OCI-LY7 (cell line): ENCODE measurements at regions of chr6 and their contacts with region 1.

Region 1: DNA sequence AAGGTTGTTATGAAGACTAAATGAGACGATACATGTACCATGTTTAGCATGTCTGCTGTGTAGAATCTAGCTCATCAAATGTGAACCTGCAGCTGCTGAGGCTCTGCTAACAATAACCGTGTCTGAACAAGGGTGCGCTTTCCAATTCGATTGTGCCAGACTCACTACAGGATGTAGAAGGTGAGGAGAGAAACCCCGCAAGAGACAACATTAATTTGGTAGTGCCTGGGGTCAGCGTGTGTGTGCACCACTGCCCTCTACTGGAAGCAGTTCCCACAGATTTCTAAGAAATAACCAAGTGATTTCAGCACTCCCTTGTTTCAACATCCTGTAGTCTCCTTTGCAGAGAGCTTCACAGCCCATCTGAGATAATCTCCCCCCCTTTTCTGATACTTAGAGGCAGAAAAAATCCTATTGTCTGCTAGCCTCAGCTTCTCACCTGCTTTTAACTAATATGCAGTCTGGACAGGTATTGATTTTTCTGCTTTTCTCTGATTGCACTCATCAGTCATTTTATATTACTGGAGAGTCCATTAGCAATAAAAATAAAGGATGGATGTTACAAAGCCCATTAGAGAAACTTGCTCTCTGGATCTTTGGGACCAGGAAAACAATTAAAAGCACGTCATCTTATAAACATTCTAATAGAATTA is 96.7 kb upstream of the BACH2 start:
- DNase-seq: peak; percentile 93
- H3K4me3 ChIP-seq: peak overlapping the region; percentile 18
- H3K27ac ChIP-seq: peak overlapping the region; percentile 71
- H3K4me1 ChIP-seq: peaks cover 67% of the 10 kb centered on the region
- CTCF ChIP-seq: peak; percentile 97

Region 2: GRCh38 chr6:89940225-89941027 is 452.9 kb before region 1 on chr6:
- CTCF ChIA-PET with region 1: interaction called, 7 read pairs
- POLR2A ChIA-PET with region 1: no interaction called
- intact Hi-C with region 1: loop called (anchors 5 kb)
- DNase-seq: peak; percentile 71
- H3K4me3 ChIP-seq: no peak overlapping the region
- H3K27ac ChIP-seq: no peak overlapping the region
- H3K4me1 ChIP-seq: no peaks in the 10 kb centered on the region
- CTCF ChIP-seq: peak; percentile 89

Region 3: DNA sequence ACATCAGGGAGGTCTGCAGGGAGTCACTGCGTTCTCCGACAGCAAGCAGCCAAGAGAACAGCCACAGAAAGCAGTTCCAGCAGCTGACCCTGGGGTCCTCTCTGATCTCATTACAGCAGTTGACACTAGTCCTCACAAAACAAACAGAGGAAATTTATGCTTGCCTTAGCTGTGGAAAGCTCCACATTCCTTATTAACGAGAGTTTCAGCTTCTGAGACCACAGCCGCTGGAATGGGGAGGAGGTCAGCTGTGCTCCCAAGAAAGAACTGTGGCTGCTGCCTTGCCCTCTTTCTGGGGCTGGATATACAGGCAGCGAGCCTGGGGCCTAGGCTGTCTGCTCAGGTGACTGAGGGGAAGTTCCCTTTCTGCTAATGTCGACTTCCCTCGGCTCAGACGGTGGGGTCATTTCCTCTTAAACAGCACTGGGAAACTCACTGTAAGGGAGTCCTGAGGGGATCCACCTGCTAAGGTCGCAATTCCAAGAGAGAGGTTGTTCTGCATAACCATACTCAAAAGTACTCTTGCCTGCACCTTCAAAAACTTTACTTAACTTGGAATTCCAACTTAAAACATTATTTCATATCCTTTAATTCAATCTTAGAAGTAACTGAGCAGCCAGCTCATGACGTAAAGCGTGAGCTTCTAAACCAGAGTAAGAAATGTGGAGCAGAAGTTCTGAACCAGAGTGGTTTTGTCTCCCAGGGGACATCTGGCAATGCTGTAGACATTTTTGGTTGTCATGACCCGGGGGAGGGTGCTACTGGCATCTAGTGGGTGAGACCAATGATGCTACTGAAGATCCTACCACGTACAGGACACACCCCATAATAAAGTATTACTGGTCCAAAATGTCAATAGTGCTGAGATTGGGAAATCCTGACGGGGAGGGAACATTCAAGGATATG is 177.0 kb before region 1 on chr6:
- CTCF ChIA-PET with region 1: no interaction called
- POLR2A ChIA-PET with region 1: no interaction called
- intact Hi-C with region 1: loop called (anchors 10 kb)
- DNase-seq: peak; percentile 70
- H3K4me3 ChIP-seq: peak overlapping the region; percentile 18
- H3K27ac ChIP-seq: peak overlapping the region; percentile 60
- H3K4me1 ChIP-seq: peaks cover 79% of the 10 kb centered on the region
- CTCF ChIP-seq: peak; percentile 60

Region 4: DNA sequence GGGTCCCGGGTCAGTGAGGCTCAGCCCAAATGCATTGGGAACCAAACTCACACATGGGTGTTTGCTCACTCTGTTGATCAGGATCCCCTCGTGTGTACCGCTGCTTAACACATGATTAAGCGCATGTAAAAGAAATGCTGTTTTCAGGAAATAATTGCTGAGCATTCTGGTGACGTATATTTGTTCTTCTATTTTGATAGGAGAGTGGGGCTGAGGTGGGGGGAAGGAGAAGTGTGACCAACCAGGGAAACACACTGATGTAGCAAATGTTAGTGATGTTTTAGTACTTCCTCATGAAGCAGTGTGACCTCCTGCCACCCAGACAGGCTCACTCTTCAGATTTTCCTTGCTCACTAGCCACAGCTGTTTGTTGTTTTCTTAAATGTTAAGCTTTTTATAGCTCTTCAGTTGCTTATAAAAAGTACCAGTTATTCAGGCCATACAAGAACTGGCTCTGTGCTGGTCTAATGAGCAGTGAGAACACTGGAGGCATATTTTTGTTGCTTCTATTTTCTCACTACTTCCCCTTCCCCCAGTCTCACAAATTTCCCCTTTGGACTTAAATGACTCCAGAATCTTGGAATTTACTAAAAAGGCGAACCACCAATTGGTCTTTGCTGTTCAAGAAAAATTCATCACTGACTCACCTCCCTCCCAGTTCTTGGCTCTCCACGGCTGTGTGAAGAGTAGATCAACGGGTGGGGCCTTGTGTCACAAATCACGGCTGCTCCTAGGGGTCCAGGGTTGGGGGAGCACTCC is 17.5 kb before region 1 on chr6:
- CTCF ChIA-PET with region 1: interaction called, 4 read pairs
- POLR2A ChIA-PET with region 1: interaction called, 39 read pairs
- intact Hi-C with region 1: no loop called
- DNase-seq: peak; percentile 97
- H3K4me3 ChIP-seq: peak overlapping the region; percentile 68
- H3K27ac ChIP-seq: peak overlapping the region; percentile 100
- H3K4me1 ChIP-seq: peaks cover 98% of the 10 kb centered on the region
- CTCF ChIP-seq: no peak

Region 5: DNA sequence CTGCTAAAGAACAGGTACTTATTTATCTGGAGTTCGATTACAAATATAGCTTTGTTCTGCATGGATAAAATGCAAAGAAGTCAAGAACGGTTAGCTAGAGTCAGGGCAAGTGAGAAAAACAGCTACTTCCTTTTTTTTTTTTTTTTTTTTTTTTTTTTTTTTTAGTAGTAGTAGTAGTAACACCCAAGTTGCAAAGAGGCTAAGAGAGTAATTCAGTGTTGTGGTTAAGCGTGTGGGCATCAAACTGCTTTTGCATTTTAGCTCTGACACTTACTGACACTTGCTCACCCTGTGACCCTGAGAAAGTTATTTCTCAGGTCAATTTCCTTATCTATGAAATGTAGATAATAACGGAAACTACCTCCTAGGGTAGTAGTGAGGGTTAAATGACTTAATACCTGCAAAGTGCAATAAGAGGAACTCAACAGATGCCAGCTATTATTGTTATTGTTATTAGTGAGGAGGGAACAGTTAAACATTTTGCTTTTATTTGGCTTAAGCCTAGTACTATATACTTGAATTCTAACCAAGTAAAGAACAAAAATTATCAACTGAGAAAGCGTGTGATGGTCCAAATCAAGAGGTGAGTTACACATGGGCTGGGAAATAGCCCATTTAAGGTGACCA is 10.0 kb before region 1 on chr6:
- CTCF ChIA-PET with region 1: interaction called, 6 read pairs
- POLR2A ChIA-PET with region 1: interaction called, 39 read pairs
- intact Hi-C with region 1: no loop called
- DNase-seq: peak; percentile 89
- H3K4me3 ChIP-seq: peak overlapping the region; percentile 59
- H3K27ac ChIP-seq: peak overlapping the region; percentile 97
- H3K4me1 ChIP-seq: peaks cover 97% of the 10 kb centered on the region
- CTCF ChIP-seq: no peak